ENCODE measurements at regions of chr6 and their contacts with region 1.

Region 1: GRCh38 chr6:26401987-26402658 is at the start of gene BTN3A1:
- DNase-seq: peak; percentile 71
- H3K4me3 Mint-ChIP-seq: peak within 1 kb of the TSS; percentile 92
- H3K27ac Mint-ChIP-seq: peak within 1 kb of the TSS; percentile 97
- H3K4me1 Mint-ChIP-seq: peaks cover 47% of the 10 kb centered on the region
- H3K27me3 Mint-ChIP-seq: no peaks in the 10 kb centered on the region
- total RNA-seq, gene BTN3A1: 37.6 to 40.0 TPM

Region 2: DNA sequence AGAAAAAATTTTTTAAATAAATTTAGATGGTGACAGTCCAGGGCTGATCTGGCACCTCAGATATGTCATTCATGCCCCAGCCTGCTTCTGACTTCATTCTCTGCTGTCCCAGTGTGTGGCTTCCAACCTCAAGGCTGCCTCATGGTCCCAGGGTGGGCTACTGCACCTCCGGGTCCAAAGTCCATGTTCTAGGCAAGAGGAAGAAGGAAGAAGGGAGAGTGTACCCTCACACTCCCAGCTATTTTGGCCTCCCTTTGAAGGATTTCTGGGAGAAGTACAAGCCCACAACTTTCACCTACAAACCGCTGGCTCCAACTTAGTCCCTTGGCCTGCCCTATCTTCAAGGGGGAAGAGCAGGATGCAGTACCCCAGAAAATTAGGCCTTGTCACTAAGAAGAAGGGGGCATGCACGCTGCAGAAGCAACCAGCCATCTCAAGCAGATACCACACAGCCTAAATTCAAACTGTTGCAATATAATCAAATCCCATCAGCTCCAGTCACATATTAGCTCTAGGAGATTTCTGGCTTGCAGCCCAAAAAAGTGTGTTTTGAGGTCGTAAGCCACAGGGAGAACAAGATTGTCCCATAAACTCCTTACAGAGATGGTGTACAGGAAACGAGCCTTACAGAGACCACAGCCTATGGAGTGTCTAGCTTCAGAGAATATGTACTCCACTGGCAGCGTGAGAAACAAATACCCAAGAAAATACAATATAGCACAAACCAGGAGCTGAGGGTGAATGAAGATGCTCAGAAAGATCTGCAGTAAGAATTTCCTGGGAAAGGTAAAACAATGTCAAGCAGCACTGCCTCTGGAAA is 38.0 kb before region 1 on chr6:
- CTCF ChIA-PET with region 1: no interaction called
- intact Hi-C with region 1: loop called (anchors 1 kb)
- DNase-seq: peak; percentile 34
- H3K4me3 Mint-ChIP-seq: no peak overlapping the region
- H3K27ac Mint-ChIP-seq: no peak overlapping the region
- H3K4me1 Mint-ChIP-seq: peaks cover 51% of the 10 kb centered on the region
- H3K27me3 Mint-ChIP-seq: no peaks in the 10 kb centered on the region

Region 3: DNA sequence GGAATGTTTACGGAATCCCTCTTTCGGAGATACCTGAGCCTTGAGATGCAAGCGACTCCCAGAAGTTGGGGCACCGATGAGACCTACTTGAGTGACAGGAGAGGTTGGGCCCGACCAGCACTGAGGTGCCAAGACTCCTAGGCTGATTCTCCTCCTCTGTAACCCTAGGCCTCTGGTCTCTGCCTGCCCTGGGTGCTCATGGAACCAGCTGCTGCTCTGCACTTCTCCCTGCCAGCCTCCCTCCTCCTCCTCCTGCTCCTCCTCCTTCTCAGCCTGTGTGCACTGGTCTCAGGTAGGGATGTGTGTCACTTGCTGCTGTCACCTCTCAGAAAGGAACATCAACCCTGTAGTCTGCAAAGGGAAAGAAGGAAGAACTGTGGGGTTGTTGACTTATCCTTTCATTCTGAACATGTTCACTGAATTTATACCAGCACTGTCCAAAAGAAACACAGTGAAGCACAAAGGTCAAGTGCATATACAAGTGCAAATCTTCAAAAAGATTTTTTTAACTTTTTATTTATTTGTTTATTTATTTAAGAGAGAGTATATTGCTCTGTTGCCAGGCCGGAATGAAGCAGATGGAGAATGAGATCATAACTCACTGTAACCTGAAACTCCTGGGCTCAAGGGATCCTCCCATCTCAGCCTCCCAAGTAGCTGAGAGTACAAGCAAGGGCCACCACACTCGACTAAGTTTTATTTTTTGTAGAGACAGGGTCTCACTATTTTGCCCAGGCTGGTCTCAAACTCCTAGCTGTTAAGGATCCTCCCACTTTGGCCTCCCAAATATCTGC is 18.3 kb before region 1 on chr6:
- CTCF ChIA-PET with region 1: no interaction called
- intact Hi-C with region 1: loop called (anchors 2 kb)
- DNase-seq: peak; percentile 56
- H3K4me3 Mint-ChIP-seq: peak overlapping the region; percentile 97
- H3K27ac Mint-ChIP-seq: peak overlapping the region; percentile 94
- H3K4me1 Mint-ChIP-seq: peaks cover 26% of the 10 kb centered on the region
- H3K27me3 Mint-ChIP-seq: no peaks in the 10 kb centered on the region

Region 4: DNA sequence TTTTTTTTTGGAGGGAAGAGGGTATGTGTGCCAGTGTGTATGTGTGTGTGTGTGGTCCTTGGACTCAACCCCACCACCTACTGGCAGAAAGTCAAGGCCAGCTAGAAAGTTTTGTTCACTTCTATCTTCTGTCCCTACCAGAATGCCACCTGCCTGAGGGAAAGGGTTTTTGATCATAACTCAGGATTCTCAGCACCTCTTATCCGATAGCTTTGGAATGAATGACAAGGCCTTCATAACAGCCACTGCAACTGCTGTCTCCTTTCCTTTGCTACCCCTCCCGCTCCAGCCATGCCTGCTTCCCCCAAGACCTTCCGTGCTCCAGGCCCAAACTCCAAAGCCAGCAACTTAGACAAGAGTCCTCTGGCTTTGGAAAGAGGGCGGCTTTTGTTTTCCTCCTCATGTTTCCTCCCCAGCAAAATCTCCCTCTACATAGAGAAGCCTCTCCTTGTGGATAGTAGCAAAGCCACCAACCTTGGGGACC is 18.6 kb after region 1 on chr6:
- CTCF ChIA-PET with region 1: no interaction called
- intact Hi-C with region 1: loop called (anchors 1 kb)
- DNase-seq: peak; percentile 38
- H3K4me3 Mint-ChIP-seq: no peak overlapping the region
- H3K27ac Mint-ChIP-seq: no peak overlapping the region
- H3K4me1 Mint-ChIP-seq: peaks cover 4% of the 10 kb centered on the region
- H3K27me3 Mint-ChIP-seq: no peaks in the 10 kb centered on the region

Region 5: GRCh38 chr6:26439657-26440056 is 37.5 kb after region 1 on chr6:
- CTCF ChIA-PET with region 1: no interaction called
- intact Hi-C with region 1: loop called (anchors 5 kb)
- DNase-seq: no peak
- H3K4me3 Mint-ChIP-seq: peak overlapping the region; percentile 96
- H3K27ac Mint-ChIP-seq: peak overlapping the region; percentile 95
- H3K4me1 Mint-ChIP-seq: peaks cover 35% of the 10 kb centered on the region
- H3K27me3 Mint-ChIP-seq: no peaks in the 10 kb centered on the region

Region 6: GRCh38 chr6:26457806-26458688 is 55.9 kb after region 1 on chr6 and contains the start of gene BTN2A1:
- CTCF ChIA-PET with region 1: no interaction called
- intact Hi-C with region 1: loop called (anchors 1 kb)
- DNase-seq: peak; percentile 84
- H3K4me3 Mint-ChIP-seq: peak within 1 kb of the TSS; percentile 96
- H3K27ac Mint-ChIP-seq: peak within 1 kb of the TSS; percentile 96
- H3K4me1 Mint-ChIP-seq: peaks cover 48% of the 10 kb centered on the region
- H3K27me3 Mint-ChIP-seq: no peaks in the 10 kb centered on the region
- total RNA-seq, gene BTN2A1: 16.0 TPM